T-cell (primary cell): ENCODE measurements at regions of chr9 and their contacts with region 1.

Region 1: DNA sequence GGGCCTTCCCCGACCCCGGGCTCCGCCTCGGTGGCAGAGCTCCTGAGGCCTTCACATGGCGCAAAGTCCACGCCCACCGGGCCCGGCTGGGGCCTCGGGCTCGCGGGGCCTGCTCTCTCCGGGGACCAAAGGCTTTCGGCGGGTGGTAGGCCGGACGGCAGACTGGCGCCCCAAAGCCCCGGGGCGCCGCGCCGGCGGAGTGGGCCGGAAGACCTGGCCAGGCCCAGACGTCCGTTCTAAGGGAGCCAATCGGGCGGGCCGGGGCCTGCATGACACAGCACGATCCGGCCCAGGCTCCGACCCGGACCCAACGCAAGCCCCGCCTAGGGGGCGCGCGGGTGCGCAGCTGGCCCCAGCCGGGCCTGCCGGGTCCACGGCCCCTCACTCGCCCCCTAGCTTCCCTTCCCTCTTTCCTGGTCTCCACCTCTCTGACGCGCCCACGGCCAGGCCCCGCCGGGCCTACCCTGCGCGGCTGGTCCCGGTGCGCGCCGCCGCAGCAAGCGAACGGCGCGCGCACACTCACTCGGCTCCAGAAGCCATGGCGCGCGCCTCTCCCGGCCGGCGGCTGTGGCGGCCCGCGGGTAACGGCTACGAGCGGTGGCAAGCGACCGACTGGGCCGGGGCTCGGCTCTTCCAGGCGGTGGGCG is 488 bp downstream of the VCP start:
- DNase-seq: peak; percentile 29 to 80 (median 63)
- ATAC-seq: peak; percentile 56 to 62 (median 60)
- H3K4me3 ChIP-seq: peak overlapping the region; percentile 75 to 85
- H3K4me3 Mint-ChIP-seq: peak overlapping the region; percentile 87 to 91 (median 91)
- H3K27ac ChIP-seq: peak overlapping the region; percentile 87
- H3K27ac Mint-ChIP-seq: peak overlapping the region; percentile 94 to 95
- H3K4me1 ChIP-seq: peaks cover 15 to 46% of the 10 kb centered on the region in 2 experiments
- H3K4me1 Mint-ChIP-seq: peaks cover 48 to 56% (median 50%) of the 10 kb centered on the region in 3 donors
- H3K27me3 ChIP-seq: no peaks in the 10 kb centered on the region
- H3K27me3 Mint-ChIP-seq: no peaks in the 10 kb centered on the region

Region 2: GRCh38 chr9:34334916-34335315 is 737.0 kb before region 1 on chr9:
- CTCF ChIA-PET with region 1: no interaction called
- POLR2A ChIA-PET with region 1: interaction called in 1 of 2 experiments, 14 read pairs
- DNase-seq: no peak
- ATAC-seq: no peak
- H3K4me3 ChIP-seq: no peak overlapping the region
- H3K4me3 Mint-ChIP-seq: no peak overlapping the region
- H3K27ac ChIP-seq: no peak overlapping the region
- H3K27ac Mint-ChIP-seq: no peak overlapping the region
- H3K4me1 ChIP-seq: peaks cover 2 to 7% of the 10 kb centered on the region in 2 experiments
- H3K4me1 Mint-ChIP-seq: peaks cover 22 to 23% (median 23%) of the 10 kb centered on the region in 3 donors
- H3K27me3 ChIP-seq: no peaks in the 10 kb centered on the region
- H3K27me3 Mint-ChIP-seq: no peaks in the 10 kb centered on the region

Region 3: DNA sequence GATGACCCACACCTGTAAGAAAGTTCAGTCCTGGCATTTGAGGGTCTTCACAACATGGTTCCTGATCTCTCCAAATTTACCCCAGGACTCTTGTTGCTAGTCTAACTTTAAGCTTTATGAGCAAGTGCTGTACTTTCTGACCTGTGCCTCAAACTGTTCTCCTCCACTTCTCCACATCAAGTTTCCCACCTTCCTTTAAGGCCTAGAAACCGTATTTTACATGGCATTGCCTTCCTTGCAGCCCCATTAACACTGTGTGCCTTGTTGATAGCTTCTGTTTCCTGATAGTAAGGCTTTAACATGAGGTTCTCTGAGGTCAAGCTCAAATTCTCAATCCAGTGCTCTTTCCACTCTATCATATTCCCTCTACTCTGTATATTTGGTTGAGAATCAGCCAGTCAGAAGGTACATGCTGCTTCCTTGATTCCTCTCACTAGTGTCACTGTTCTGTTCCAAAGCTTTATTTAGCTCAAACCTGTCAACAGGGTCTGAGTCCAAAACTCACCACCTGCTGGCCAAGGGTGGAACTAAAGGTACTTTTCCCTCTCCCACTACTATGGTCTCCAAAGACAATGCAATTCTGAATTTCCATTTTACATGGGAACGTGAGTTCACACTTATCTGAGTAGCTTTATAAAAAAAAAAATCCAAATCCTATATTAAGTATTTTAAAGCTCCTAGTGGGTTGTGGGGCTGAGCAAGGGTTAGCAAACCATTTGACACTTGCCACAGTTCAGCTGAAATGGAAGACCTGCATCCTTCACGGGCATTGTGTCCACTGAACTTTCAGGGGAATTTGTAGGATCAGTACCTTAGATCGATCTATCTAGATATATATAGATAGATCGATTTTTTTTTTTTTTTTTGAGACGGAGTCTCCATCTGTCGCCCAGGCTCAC is 20.6 kb before region 1 on chr9:
- CTCF ChIA-PET with region 1: interaction called in 1 of 2 experiments, 16 read pairs
- POLR2A ChIA-PET with region 1: interaction called in 1 of 2 experiments, 5 read pairs
- DNase-seq: peak in 31 of 35 experiments; percentile 9 to 67 (median 41)
- ATAC-seq: peak; percentile 54 to 69 (median 64)
- H3K4me3 ChIP-seq: no peak overlapping the region
- H3K4me3 Mint-ChIP-seq: no peak overlapping the region
- H3K27ac ChIP-seq: no peak overlapping the region
- H3K27ac Mint-ChIP-seq: peak overlapping the region in 1 of 2 donors; percentile 23
- H3K4me1 ChIP-seq: no peaks in the 10 kb centered on the region
- H3K4me1 Mint-ChIP-seq: peaks cover 4 to 6% (median 4%) of the 10 kb centered on the region in 3 donors
- H3K27me3 ChIP-seq: no peaks in the 10 kb centered on the region
- H3K27me3 Mint-ChIP-seq: no peaks in the 10 kb centered on the region

Region 4: GRCh38 chr9:35096035-35096849 is 24.3 kb after region 1 on chr9 and contains the start of gene PIGO:
- CTCF ChIA-PET with region 1: interaction called in 1 of 2 experiments, 17 read pairs
- POLR2A ChIA-PET with region 1: no interaction called
- DNase-seq: peak; percentile 78 to 94 (median 87)
- ATAC-seq: peak; percentile 91 to 95 (median 94)
- H3K4me3 ChIP-seq: peak within 1 kb of the TSS; percentile 85 to 99
- H3K4me3 Mint-ChIP-seq: peak within 1 kb of the TSS; percentile 83 to 84 (median 83)
- H3K27ac ChIP-seq: peak within 1 kb of the TSS; percentile 99
- H3K27ac Mint-ChIP-seq: peak within 1 kb of the TSS; percentile 89 to 93
- H3K4me1 ChIP-seq: peaks cover 4 to 23% of the 10 kb centered on the region in 2 experiments
- H3K4me1 Mint-ChIP-seq: peaks cover 34 to 41% (median 34%) of the 10 kb centered on the region in 3 donors
- H3K27me3 ChIP-seq: no peaks in the 10 kb centered on the region
- H3K27me3 Mint-ChIP-seq: no peaks in the 10 kb centered on the region
- total RNA-seq, gene PIGO: 23.0 to 32.1 (median 29.9) TPM

Region 5: DNA sequence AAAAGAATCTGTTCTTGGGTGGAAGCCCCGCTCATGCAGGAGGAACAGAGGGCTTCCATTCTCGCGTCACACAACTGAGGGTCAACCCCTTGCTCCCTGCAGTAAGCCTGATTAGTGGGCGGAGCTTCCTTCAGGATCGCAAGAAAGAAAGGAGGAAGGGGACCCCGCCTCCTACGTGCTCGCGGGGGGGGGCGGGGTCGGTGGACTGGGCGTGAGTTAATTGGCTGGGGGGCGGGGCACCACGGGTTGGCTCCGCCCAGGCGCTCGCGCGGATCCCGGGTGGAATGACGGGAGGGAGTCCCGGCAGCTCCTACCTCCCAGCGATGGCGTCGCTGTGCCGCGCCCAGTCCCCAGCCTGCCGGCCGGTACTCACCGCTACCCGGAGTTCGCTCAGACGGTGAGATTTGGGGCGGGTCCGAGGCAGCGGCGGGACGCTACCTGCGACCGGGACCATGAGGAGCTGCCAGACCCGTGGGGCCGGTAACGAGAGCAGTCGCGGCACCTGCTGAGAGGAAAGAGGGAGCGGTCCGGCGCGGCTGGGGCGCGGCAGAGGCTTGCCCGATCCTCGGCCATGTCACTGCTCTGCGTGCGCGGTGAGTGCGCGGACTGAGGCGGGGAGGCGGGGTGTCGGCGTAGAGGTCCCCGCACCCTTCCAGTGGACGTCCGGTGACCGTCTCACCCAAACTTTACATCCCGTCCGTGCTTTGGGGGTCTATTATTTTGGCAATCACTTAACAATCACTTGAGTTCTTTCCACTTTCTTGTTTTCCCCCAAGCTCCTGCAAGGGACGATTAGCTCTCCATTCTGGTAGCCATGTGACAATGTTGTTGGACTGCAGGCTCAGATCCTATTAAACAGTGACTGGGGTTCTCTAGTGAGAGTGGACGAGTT is 90.0 kb after region 1 on chr9 and contains the start of gene UNC13B:
- CTCF ChIA-PET with region 1: no interaction called
- POLR2A ChIA-PET with region 1: no interaction called
- DNase-seq: peak; percentile 15 to 80 (median 46)
- ATAC-seq: peak; percentile 89 to 92 (median 91)
- H3K4me3 ChIP-seq: peak within 1 kb of the TSS; percentile 84 to 91
- H3K4me3 Mint-ChIP-seq: peak within 1 kb of the TSS; percentile 87 to 93 (median 92)
- H3K27ac ChIP-seq: peak within 1 kb of the TSS; percentile 29
- H3K27ac Mint-ChIP-seq: peak within 1 kb of the TSS in 1 of 2 donors; percentile 73
- H3K4me1 ChIP-seq: peaks cover 0 to 15% of the 10 kb centered on the region in 2 experiments
- H3K4me1 Mint-ChIP-seq: peaks cover 13 to 33% (median 28%) of the 10 kb centered on the region in 3 donors
- H3K27me3 ChIP-seq: peaks cover 0 to 7% of the 10 kb centered on the region in 2 experiments
- H3K27me3 Mint-ChIP-seq: peaks cover 0 to 3% of the 10 kb centered on the region in 2 donors
- total RNA-seq, gene UNC13B: 0.45 to 1.2 (median 0.72) TPM

Region 6: GRCh38 chr9:35272989-35273388 is 201.1 kb after region 1 on chr9:
- CTCF ChIA-PET with region 1: no interaction called
- POLR2A ChIA-PET with region 1: no interaction called
- DNase-seq: no peak
- ATAC-seq: no peak
- H3K4me3 ChIP-seq: no peak overlapping the region
- H3K4me3 Mint-ChIP-seq: no peak overlapping the region
- H3K27ac ChIP-seq: no peak overlapping the region
- H3K27ac Mint-ChIP-seq: no peak overlapping the region
- H3K4me1 ChIP-seq: no peaks in the 10 kb centered on the region
- H3K4me1 Mint-ChIP-seq: peaks cover 10 to 14% (median 12%) of the 10 kb centered on the region in 3 donors
- H3K27me3 ChIP-seq: no peaks in the 10 kb centered on the region
- H3K27me3 Mint-ChIP-seq: peaks cover 15 to 19% of the 10 kb centered on the region in 2 donors